ENCODE measurements at regions of chr18 and their contacts with region 1.

Region 1: DNA sequence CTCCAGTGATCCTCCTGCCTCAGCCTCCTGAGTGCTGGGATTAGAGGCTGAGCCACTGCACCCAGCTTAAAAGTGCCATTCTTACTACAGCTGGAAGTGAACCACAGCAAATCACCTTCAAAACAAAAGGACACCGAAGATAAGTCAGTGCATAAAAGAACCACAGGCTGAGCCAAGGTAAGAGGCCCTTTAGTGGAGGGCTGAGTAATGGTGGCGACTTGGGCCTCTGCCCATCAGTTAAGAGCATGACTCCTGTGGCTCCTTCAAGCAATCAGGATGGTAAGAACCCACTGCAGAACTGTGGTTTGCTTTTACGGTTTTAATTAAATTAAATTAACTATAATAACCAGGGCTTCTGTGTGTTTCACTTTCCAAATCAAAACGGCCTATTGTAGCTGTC is 75.1 kb downstream of the CTAGE1 start:
- DNase-seq: peak; percentile 18
- ATAC-seq: peak; percentile 44
- H3K4me3 Mint-ChIP-seq: no peak overlapping the region
- H3K27ac Mint-ChIP-seq: no peak overlapping the region
- H3K4me1 Mint-ChIP-seq: peaks cover 6% of the 10 kb centered on the region
- H3K27me3 Mint-ChIP-seq: peaks cover 18% of the 10 kb centered on the region

Region 2: DNA sequence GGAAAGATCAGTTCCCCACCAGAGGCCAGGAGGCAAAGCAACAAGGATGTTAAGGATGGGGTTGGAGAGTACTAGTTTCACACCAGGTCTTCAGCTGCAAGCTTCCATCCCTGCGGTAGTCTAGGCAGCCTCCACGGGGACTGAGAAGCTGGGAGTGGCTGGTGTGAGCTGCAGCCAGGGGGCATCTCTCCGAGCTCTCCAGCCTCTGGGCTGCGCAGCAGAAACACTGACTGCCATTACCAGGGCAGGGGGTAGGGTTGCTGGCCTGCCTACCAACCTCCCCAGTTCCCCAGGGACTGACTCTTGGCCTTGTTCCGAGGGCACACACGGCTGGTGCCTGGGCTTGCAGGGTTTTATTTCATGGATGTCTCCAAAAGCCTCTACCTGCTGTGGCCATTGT is 157.4 kb before region 1 on chr18:
- CTCF ChIA-PET with region 1: no interaction called
- POLR2A ChIA-PET with region 1: no interaction called
- intact Hi-C with region 1: no loop called
- DNase-seq: no peak
- ATAC-seq: no peak
- H3K4me3 Mint-ChIP-seq: no peak overlapping the region
- H3K27ac Mint-ChIP-seq: no peak overlapping the region
- H3K4me1 Mint-ChIP-seq: no peaks in the 10 kb centered on the region
- H3K27me3 Mint-ChIP-seq: peaks cover 4% of the 10 kb centered on the region

Region 3: GRCh38 chr18:22286621-22287020 is 56.0 kb before region 1 on chr18:
- CTCF ChIA-PET with region 1: no interaction called
- POLR2A ChIA-PET with region 1: no interaction called
- intact Hi-C with region 1: loop called in 1 of 2 experiments (anchors 5 kb)
- DNase-seq: no peak
- ATAC-seq: no peak
- H3K4me3 Mint-ChIP-seq: no peak overlapping the region
- H3K27ac Mint-ChIP-seq: no peak overlapping the region
- H3K4me1 Mint-ChIP-seq: no peaks in the 10 kb centered on the region
- H3K27me3 Mint-ChIP-seq: no peaks in the 10 kb centered on the region

Region 4: DNA sequence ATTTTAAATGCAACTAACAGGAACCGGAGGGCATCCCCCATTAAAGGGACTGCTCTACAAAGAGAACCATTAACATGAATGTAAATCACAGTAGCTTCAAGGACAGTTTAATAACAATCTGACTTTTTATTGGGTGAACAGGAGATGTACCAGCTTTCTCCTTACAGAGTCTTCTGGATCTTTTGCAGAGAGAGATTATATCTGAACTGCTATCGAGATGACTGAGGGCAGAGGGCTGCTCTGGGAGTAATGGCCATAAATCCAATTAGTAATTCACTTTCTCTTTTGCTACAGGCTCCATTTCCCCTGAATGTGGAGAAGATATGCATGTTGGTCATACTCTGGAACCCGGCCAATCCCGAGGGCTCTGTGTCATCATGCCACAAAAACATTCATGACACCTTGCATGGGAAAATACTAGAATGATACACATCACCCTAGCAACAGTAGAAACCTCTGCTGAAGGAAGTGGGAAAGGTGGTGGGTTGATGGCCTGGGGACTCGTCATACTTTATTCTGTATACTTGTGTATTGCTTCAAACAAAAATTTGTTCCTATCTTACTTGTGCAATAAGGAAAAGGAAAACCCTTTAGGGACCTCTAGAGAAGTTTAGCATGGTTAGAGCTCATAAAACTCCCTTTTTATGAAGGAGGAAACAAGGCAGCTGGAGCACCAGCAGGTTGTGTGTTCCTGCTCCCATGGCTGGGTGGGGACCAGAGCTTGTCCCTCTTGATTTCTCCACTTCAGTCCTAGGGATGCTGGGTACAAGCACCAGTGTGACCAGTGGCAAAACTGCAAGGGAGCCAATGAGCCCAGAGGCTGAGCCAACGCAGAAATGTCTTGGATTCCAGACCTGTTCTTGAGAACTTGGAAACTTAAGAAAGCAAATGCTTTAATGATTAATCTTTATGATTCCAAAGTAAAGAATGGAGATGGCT is 49.1 kb after region 1 on chr18:
- CTCF ChIA-PET with region 1: no interaction called
- POLR2A ChIA-PET with region 1: no interaction called
- intact Hi-C with region 1: loop called in 1 of 2 experiments (anchors 5 kb)
- DNase-seq: peak; percentile 33
- ATAC-seq: no peak
- H3K4me3 Mint-ChIP-seq: no peak overlapping the region
- H3K27ac Mint-ChIP-seq: no peak overlapping the region
- H3K4me1 Mint-ChIP-seq: no peaks in the 10 kb centered on the region
- H3K27me3 Mint-ChIP-seq: no peaks in the 10 kb centered on the region